Activated naive CD4-positive, alpha-beta T cell treated with anti-CD3 and anti-CD28 coated beads for 36 hours (primary cell): ENCODE measurements at regions of chr12 and their contacts with region 1.

Region 1: GRCh38 chr12:89244536-89244935 is 107.8 kb downstream of the DUSP6 start:
- DNase-seq: peak; percentile 57
- H3K4me3 Mint-ChIP-seq: peak overlapping the region; percentile 36
- H3K27ac Mint-ChIP-seq: peak overlapping the region; percentile 73
- H3K4me1 Mint-ChIP-seq: peaks cover 33% of the 10 kb centered on the region
- H3K27me3 Mint-ChIP-seq: no peaks in the 10 kb centered on the region

Region 2: GRCh38 chr12:87982208-87982607 is 1262.3 kb before region 1 on chr12:
- CTCF ChIA-PET with region 1: no interaction called
- intact Hi-C with region 1: no loop called
- DNase-seq: no peak
- H3K4me3 Mint-ChIP-seq: no peak overlapping the region
- H3K27ac Mint-ChIP-seq: no peak overlapping the region
- H3K4me1 Mint-ChIP-seq: no peaks in the 10 kb centered on the region
- H3K27me3 Mint-ChIP-seq: peaks cover 6% of the 10 kb centered on the region

Region 3: DNA sequence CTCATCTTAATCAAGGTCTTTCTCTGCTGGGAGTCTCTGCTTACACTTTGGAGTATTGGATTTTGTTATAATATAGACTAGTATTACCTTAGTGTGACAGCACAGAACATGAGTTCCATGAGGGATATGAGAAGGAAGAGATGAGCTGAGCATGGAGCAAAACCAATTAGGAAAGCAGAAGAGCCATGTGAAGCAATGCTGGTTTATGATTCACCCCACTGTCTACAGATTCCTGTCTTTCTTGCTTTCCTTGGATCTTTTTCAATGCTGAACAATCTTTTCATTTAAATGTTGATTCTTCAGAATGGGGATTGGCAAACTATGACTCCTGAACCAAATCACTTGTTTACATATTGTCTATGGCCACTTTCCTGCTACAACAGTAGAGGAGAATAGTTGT is 593.8 kb before region 1 on chr12:
- CTCF ChIA-PET with region 1: no interaction called
- intact Hi-C with region 1: no loop called
- DNase-seq: no peak
- H3K4me3 Mint-ChIP-seq: no peak overlapping the region
- H3K27ac Mint-ChIP-seq: no peak overlapping the region
- H3K4me1 Mint-ChIP-seq: no peaks in the 10 kb centered on the region
- H3K27me3 Mint-ChIP-seq: no peaks in the 10 kb centered on the region

Region 4: GRCh38 chr12:89051065-89051677 is 193.4 kb before region 1 on chr12:
- CTCF ChIA-PET with region 1: no interaction called
- intact Hi-C with region 1: loop called (anchors 1 kb)
- DNase-seq: peak; percentile 37
- H3K4me3 Mint-ChIP-seq: no peak overlapping the region
- H3K27ac Mint-ChIP-seq: no peak overlapping the region
- H3K4me1 Mint-ChIP-seq: peaks cover 10% of the 10 kb centered on the region
- H3K27me3 Mint-ChIP-seq: no peaks in the 10 kb centered on the region

Region 5: DNA sequence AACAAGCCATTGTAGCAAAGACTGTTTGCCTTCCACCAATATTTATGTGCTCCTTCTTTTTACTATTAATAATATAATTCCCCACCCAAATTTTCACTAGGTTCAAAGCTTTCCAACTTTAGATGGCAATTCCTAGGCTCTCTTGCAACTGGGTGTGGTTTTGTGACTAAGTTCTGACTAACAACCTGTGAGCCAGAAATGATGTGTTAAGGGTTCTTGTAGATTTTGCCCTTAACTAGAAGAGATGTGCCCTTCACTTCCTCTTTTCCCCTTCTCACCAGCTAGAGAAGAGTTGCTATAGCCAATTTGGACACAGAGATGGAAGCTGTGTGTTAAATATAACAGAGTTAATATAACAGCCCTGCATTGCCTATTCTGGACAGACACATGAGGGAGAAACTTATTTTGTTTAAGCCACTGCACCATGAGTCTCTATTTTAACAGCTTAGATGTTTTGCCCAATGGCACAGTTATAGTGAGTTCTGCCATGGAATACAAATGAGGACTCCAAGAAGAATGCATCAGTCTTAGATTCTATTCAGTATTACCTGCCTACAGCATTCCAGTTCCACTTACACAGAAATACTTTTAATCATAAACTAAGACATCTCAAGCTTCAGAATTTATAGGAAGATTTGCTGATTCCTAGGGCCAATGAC is 108.4 kb before region 1 on chr12:
- CTCF ChIA-PET with region 1: no interaction called
- intact Hi-C with region 1: loop called (anchors 1 kb)
- DNase-seq: peak; percentile 9
- H3K4me3 Mint-ChIP-seq: no peak overlapping the region
- H3K27ac Mint-ChIP-seq: no peak overlapping the region
- H3K4me1 Mint-ChIP-seq: peaks cover 22% of the 10 kb centered on the region
- H3K27me3 Mint-ChIP-seq: no peaks in the 10 kb centered on the region

Region 6: DNA sequence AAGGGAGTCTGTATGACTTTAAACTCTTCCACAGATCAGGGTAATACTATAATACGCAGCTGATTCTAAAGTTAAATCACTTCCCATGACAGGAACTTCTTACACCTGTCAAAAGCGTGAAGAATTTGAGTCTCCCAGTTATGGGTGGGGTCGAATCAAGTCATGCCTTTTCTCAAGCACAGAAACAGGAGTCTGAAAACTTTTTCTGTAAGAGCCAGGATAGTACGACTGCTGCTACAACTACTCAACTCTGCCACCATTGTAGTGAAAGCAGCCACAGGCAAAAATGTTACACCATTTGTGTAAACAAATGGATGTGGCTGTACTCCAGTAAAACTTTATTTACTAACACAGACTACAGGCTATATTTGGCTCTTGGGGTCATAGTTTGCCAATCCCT is 17.4 kb after region 1 on chr12:
- CTCF ChIA-PET with region 1: no interaction called
- intact Hi-C with region 1: loop called (anchors 1 kb)
- DNase-seq: no peak
- H3K4me3 Mint-ChIP-seq: no peak overlapping the region
- H3K27ac Mint-ChIP-seq: no peak overlapping the region
- H3K4me1 Mint-ChIP-seq: peaks cover 24% of the 10 kb centered on the region
- H3K27me3 Mint-ChIP-seq: no peaks in the 10 kb centered on the region

Region 7: GRCh38 chr12:89306827-89307473 is 62.4 kb after region 1 on chr12:
- CTCF ChIA-PET with region 1: no interaction called
- intact Hi-C with region 1: no loop called
- DNase-seq: no peak
- H3K4me3 Mint-ChIP-seq: no peak overlapping the region
- H3K27ac Mint-ChIP-seq: no peak overlapping the region
- H3K4me1 Mint-ChIP-seq: peaks cover 30% of the 10 kb centered on the region
- H3K27me3 Mint-ChIP-seq: no peaks in the 10 kb centered on the region

Region 8: DNA sequence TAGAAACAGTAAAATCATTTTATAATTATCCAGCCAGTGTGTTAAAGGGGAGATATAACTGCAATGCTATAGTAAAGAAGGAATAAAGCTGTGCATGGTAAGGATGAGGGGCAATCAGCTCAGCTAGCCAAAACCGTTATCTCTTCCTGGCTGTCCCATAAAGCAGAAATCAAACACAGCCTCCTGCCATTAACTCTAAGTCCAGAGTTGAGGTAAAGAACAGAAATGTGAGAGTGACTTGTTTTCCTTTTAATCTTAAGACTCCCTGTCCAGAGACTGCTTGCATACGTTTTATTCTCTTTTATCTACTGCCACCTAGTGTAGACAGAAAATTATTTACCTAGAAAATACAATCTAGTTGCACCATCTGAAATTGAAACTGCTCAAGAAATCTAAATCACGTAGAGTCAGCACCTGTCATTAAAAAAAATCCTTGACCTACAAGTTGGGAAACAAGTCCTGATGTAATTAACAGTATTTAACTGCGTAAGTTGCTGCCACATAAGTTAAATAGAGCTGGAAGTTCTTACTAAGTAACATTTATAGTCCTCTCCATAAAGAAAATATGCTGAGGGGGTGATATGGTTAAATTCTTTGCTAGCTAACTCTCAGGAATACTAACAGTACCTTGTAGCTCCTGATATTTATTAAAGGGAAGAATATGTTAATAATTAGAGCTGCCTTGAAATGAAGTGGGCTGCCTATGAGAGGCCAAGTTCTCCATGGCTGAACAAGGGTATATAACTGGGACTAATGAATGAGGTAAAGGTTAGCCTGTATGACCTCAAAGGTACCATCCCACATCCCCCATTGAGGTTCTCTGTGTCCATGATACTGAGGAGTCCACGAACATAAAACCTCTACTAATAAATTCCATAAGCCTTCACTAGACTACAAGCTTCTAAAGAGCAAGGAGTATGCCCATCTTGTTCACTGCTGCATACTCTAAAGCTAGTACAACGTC is 217.4 kb after region 1 on chr12:
- CTCF ChIA-PET with region 1: interaction called, 8 read pairs
- intact Hi-C with region 1: loop called (anchors 1 kb)
- DNase-seq: no peak
- H3K4me3 Mint-ChIP-seq: peak overlapping the region; percentile 15
- H3K27ac Mint-ChIP-seq: peak overlapping the region; percentile 48
- H3K4me1 Mint-ChIP-seq: peaks cover 13% of the 10 kb centered on the region
- H3K27me3 Mint-ChIP-seq: no peaks in the 10 kb centered on the region

Region 9: DNA sequence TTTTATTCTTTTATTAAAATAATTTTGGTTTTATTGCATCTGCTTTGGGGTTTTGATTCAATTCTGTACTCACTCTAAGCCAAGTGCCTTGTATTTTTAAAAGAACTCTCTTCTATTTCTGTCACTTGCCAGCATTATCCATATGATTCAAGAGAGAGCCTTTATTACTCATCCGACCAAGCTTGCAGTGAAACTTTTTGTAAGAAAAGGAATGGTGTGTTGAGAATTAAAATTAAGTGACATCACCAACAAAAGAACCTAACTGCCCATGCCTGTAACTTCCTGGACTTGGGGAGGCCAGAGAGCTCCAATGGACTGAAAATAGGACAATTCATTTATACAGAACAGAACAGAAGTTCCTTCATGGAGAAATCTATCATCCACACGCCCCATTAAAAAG is 228.0 kb after region 1 on chr12:
- CTCF ChIA-PET with region 1: no interaction called
- intact Hi-C with region 1: no loop called
- DNase-seq: no peak
- H3K4me3 Mint-ChIP-seq: no peak overlapping the region
- H3K27ac Mint-ChIP-seq: no peak overlapping the region
- H3K4me1 Mint-ChIP-seq: peaks cover 41% of the 10 kb centered on the region
- H3K27me3 Mint-ChIP-seq: no peaks in the 10 kb centered on the region